Gastrocnemius medialis (tissue), 4 donors: ENCODE measurements at regions of chr15 and their contacts with region 1.

Region 1: DNA sequence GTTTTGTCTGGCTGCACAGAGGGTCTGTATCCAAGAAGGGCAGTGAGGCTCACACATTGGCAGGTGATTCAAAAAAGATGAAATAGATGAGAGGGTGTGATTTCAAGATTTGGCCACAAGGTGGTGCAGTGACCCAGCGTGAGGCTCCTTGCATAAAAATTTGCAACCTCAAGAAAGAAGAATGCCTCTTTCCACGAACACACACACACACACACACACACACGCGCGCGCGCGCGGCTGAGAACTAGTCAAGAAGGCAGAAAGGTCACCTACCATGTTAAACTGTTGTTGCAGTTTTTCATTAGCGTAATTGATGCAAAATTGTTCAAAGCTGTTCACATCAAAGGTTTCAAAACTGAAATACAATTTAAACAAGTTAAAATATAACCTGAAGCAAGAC is 39.2 kb downstream of the MYO5C start:
- DNase-seq: peak; percentile 35 to 69
- ATAC-seq: peak; percentile 42 to 72
- H3K4me3 ChIP-seq: peak overlapping the region in 3 of 4 donors; percentile 7 to 48 (median 12)
- H3K27ac ChIP-seq: peak overlapping the region in 3 of 4 donors; percentile 35 to 55 (median 52)
- H3K4me1 ChIP-seq: peaks cover 19 to 21% of the 10 kb centered on the region in 2 donors
- H3K27me3 ChIP-seq: no peaks in the 10 kb centered on the region
- CTCF ChIP-seq: peak; percentile 76 to 81 (median 80)
- POLR2A ChIP-seq: no peak

Region 2: DNA sequence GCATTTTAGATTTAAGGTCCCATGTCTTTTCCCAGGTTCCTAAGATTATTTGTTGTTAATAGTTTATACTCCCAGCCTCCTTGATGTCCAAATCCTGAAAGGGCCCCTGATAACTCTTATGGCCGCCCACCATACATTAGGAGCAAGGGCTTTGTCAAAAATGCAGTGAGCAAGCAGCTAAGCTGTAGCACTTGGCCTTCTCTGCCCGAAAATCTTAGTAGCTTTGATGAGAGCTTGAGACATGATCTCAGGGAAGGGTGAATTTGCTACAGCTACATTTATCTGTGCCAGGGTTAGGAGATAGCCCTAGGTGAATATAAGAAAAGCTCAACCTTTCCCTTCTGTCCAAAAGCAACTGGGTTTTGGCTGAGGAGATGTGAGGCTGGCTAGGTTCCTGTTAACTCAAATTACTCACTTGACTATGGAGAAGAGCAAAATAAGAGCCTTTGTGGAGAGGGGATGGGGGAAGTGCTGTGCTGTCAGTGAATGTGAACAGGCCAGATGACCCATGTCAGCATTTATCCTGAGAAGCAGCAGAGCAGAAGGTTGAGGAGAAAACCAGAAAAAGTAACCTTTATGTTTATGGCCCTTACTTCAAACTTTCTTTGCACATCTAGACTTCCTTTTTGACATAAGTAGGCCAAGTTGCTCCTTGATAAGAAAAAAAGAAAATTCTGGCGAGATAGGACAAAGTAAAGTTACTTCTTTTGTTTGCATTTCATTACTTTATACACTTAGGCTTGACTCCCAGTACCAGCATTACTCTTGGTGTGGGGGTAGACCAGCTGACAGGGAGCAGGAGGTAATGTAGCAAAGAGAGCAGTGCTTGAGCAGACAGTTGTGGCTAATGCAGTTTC is 216.2 kb before region 1 on chr15:
- in situ Hi-C with region 1: no loop called
- intact Hi-C with region 1: no loop called
- DNase-seq: peak; percentile 30 to 31
- ATAC-seq: peak; percentile 69 to 78
- H3K4me3 ChIP-seq: no peak overlapping the region
- H3K27ac ChIP-seq: peak overlapping the region; percentile 43 to 82 (median 68)
- H3K4me1 ChIP-seq: peaks cover 68 to 73% of the 10 kb centered on the region in 2 donors
- H3K27me3 ChIP-seq: no peaks in the 10 kb centered on the region
- CTCF ChIP-seq: no peak
- POLR2A ChIP-seq: no peak

Region 3: DNA sequence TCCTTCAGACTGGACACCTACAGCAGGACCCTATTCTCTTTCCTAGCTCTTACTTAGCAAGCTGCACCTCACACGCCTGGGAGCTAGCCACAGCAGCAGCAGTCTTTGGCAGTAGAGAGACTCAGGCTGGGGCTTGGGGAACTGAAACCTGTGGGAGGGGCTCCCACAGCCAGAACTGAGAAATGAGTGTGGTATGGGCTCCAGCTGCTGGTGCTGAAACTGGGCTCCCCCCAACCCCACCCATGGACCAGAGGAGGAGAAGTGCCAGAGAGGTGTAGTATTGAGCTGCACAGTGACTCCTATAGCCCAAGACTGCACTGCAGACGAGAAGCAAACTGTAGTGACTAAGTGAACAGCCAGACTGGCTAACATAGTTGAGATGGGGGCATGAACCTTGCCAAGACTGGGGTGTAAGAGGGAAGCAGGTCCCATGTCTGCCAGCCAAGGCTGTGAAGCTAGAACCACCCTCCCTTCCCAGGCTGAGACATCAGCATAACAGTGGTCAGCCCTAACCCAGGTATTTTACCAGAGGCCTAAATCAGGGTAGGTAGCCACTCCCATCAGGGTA is 209.9 kb after region 1 on chr15:
- in situ Hi-C with region 1: no loop called
- intact Hi-C with region 1: loop called (anchors 2 kb)
- DNase-seq: peak in 1 of 2 donors; percentile 42
- ATAC-seq: peak; percentile 24
- H3K4me3 ChIP-seq: no peak overlapping the region
- H3K27ac ChIP-seq: peak overlapping the region in 2 of 4 donors; percentile 18 to 38
- H3K4me1 ChIP-seq: peaks cover 12 to 15% of the 10 kb centered on the region in 2 donors
- H3K27me3 ChIP-seq: no peaks in the 10 kb centered on the region
- CTCF ChIP-seq: no peak
- POLR2A ChIP-seq: no peak

Region 4: DNA sequence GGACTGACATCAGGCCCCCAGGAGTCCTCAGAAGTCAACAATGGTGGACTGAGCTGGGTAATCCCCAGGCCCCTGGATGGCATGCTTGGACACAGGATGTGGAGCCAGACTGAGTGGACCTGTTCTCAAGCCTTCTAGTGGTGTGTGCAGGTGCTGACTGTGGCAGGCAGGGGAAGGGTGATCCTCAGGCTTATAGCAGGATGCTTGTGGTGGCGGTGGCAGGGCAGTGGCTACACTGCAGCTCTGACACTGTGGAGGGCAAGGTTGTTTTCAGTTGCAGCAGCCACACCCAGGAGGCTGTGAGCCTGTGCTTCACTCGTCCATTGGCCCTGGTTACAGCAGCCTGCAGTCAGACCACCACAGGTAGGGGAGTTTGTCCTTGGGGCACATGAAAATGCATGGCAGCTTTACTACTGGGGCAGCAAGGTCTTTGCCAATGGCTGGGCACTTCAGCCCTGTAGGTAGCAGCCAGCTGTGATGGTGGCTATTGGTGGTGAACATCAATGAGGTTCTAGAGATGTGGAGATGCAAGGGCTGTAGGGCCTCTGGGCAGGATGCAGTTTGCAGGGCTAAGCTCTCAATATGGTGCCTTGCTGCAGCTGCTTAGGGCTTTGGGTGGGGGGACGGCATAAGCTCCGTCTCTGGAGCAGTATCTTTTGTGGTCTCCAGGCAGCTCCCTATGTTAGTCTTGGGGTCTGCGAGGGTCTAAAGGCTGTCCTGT is 289.8 kb after region 1 on chr15:
- in situ Hi-C with region 1: no loop called
- intact Hi-C with region 1: no loop called
- DNase-seq: no peak
- ATAC-seq: peak; percentile 12 to 35
- H3K4me3 ChIP-seq: no peak overlapping the region
- H3K27ac ChIP-seq: no peak overlapping the region
- H3K4me1 ChIP-seq: no peaks in the 10 kb centered on the region
- H3K27me3 ChIP-seq: no peaks in the 10 kb centered on the region
- CTCF ChIP-seq: no peak
- POLR2A ChIP-seq: no peak

Region 5: DNA sequence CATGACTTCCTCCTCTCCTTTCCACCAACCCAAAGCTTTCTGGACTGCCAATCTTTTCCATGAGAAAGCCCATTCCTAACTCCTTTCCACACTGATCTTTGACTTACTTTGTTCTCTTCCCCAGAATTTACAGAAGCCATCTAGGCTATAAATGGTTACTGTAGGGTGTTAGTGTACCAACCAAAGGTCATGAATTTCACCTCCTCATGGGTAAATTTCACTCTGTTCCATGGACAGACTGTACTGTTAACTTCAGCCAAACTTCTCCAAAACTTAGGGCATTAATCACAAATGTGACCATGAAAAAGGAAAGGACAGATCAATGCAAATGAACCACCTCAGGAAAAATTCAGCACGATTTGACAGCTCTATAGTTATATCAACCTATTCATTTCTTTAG is 367.9 kb after region 1 on chr15:
- in situ Hi-C with region 1: no loop called
- intact Hi-C with region 1: loop called (anchors 10 kb)
- DNase-seq: no peak
- ATAC-seq: no peak
- H3K4me3 ChIP-seq: no peak overlapping the region
- H3K27ac ChIP-seq: peak overlapping the region; percentile 52 to 80 (median 66)
- H3K4me1 ChIP-seq: peaks cover 33 to 77% of the 10 kb centered on the region in 2 donors
- H3K27me3 ChIP-seq: no peaks in the 10 kb centered on the region
- CTCF ChIP-seq: no peak
- POLR2A ChIP-seq: no peak

Region 6: GRCh38 chr15:52730173-52730572 is 473.8 kb after region 1 on chr15:
- in situ Hi-C with region 1: loop called (anchors 5 to 10 kb)
- intact Hi-C with region 1: loop called (anchors 1 kb)
- DNase-seq: peak; percentile 43 to 58
- ATAC-seq: peak; percentile 28 to 68
- H3K4me3 ChIP-seq: no peak overlapping the region
- H3K27ac ChIP-seq: peak overlapping the region; percentile 68 to 89 (median 86)
- H3K4me1 ChIP-seq: peaks cover 45 to 60% of the 10 kb centered on the region in 2 donors
- H3K27me3 ChIP-seq: no peaks in the 10 kb centered on the region
- CTCF ChIP-seq: no peak
- POLR2A ChIP-seq: peak in 1 of 2 donors; percentile 29